ENCODE measurements at regions of chr10 and their contacts with region 1.

Region 1: DNA sequence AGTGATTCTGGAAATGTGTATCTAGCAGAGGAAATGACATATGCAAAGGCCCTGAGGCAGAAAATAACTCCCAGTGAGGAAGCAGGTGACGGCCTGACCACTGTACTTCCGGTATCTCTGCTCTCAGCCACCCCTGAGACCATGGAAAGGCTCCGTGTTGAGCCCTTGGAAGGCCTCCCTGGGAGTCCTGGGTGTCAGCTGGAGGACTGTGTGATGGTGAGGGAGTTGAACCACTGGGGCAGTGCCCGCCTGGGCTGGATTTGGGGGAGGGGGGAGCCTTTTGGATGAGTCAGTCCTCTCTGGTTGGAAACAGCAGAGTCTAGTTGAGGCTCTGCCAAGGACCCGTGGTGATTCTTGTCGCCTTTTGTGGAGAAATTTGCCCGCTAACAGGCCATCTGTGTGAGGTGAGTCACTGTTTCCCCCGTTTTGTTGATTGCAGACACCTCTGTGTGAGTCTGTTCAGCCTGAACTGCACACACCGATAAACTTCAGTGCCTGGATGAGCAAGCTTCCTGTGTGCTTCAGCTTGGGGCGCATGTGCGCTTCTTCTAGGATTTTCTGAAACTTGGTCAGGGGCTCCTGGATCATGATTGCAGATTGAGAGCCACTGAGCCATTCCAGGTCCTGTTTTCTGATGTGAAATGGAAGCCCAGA is 98.6 kb downstream of the GRK5 start:
- DNase-seq: peak; percentile 38 to 93 (median 70)
- ATAC-seq: peak; percentile 85
- H3K4me3 ChIP-seq: peak overlapping the region; percentile 65
- H3K4me3 Mint-ChIP-seq: peak overlapping the region; percentile 71 to 93 (median 90)
- H3K27ac ChIP-seq: peak overlapping the region; percentile 90
- H3K27ac Mint-ChIP-seq: peak overlapping the region; percentile 94 to 99 (median 97)
- H3K4me1 ChIP-seq: peaks cover 47 to 53% of the 10 kb centered on the region in 2 donors
- H3K4me1 Mint-ChIP-seq: peaks cover 50 to 87% (median 74%) of the 10 kb centered on the region in 7 donors
- H3K27me3 ChIP-seq: no peaks in the 10 kb centered on the region
- H3K27me3 Mint-ChIP-seq: peaks cover 0 to 2% (median 0%) of the 10 kb centered on the region in 5 donors

Region 2: DNA sequence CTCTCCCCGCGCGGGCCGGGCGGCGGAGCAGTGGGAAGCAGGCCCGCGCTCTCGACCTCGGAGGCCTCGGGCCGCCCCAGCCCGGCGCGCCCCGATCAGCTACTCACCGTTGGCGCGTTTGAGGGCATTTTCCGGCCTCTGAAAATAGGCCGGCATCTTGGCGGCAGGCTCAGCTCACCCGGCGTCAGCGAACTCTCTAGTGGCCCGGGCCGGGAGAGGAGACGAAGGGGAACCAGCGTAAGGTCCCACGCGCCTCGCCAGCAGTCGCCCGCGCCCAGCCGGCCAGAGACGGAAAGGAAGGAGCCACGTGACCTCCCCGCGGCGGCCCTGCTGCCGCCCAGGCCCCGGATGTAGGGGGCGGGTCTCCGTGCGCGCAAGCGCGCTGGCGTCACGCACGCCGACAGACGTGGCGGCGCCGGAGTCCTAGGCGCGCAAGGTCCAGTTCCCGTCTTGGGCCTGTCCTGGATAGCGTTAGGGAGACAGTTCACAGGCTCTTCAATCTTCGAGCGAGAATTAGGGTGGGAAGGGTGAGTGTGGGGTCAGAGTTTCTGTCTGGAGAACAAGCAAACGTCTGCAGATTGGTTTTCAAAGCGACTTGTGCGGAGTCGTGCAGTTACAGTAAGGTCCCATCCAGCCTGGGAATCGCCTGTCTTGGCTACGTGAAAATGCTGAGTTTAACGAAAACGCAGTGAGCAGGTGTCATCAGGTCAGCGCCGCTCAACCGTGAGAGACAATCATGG is 225.3 kb before region 1 on chr10 and contains the start of gene EIF3A:
- CTCF ChIA-PET with region 1: no interaction called
- POLR2A ChIA-PET with region 1: no interaction called
- intact Hi-C with region 1: loop called (anchors 5 to 10 kb)
- DNase-seq: peak; percentile 87 to 98 (median 93)
- ATAC-seq: peak; percentile 90
- H3K4me3 ChIP-seq: peak within 1 kb of the TSS; percentile 83
- H3K4me3 Mint-ChIP-seq: peak within 1 kb of the TSS; percentile 86 to 99 (median 98)
- H3K27ac ChIP-seq: peak within 1 kb of the TSS; percentile 91
- H3K27ac Mint-ChIP-seq: peak within 1 kb of the TSS; percentile 93 to 100 (median 98)
- H3K4me1 ChIP-seq: peaks cover 6 to 26% of the 10 kb centered on the region in 2 donors
- H3K4me1 Mint-ChIP-seq: peaks cover 28 to 55% (median 45%) of the 10 kb centered on the region in 7 donors
- H3K27me3 ChIP-seq: no peaks in the 10 kb centered on the region
- H3K27me3 Mint-ChIP-seq: peaks cover 0 to 2% (median 0%) of the 10 kb centered on the region in 5 donors
- total RNA-seq, gene EIF3A: 87.8 to 137 (median 96.0) TPM

Region 3: GRCh38 chr10:119199231-119199992 is 106.6 kb before region 1 on chr10:
- CTCF ChIA-PET with region 1: interaction called, 10 read pairs
- POLR2A ChIA-PET with region 1: interaction called, 6 read pairs
- intact Hi-C with region 1: no loop called
- DNase-seq: peak in 8 of 9 donors; percentile 42 to 72 (median 58)
- ATAC-seq: peak; percentile 93
- H3K4me3 ChIP-seq: no peak overlapping the region
- H3K4me3 Mint-ChIP-seq: peak overlapping the region in 1 of 10 donors; percentile 35
- H3K27ac ChIP-seq: no peak overlapping the region
- H3K27ac Mint-ChIP-seq: peak overlapping the region in 3 of 9 donors; percentile 46 to 73 (median 56)
- H3K4me1 ChIP-seq: no peaks in the 10 kb centered on the region
- H3K4me1 Mint-ChIP-seq: peaks cover 4 to 30% (median 9%) of the 10 kb centered on the region in 7 donors
- H3K27me3 ChIP-seq: no peaks in the 10 kb centered on the region
- H3K27me3 Mint-ChIP-seq: peaks cover 0 to 5% (median 0%) of the 10 kb centered on the region in 5 donors

Region 4: GRCh38 chr10:119235356-119235755 is 70.6 kb before region 1 on chr10:
- CTCF ChIA-PET with region 1: no interaction called
- POLR2A ChIA-PET with region 1: no interaction called
- intact Hi-C with region 1: no loop called
- DNase-seq: no peak
- ATAC-seq: no peak
- H3K4me3 ChIP-seq: no peak overlapping the region
- H3K4me3 Mint-ChIP-seq: peak overlapping the region in 3 of 10 donors; percentile 8 to 27 (median 17)
- H3K27ac ChIP-seq: peak overlapping the region; percentile 9
- H3K27ac Mint-ChIP-seq: peak overlapping the region in 7 of 9 donors; percentile 51 to 79 (median 66)
- H3K4me1 ChIP-seq: peaks cover 0 to 16% of the 10 kb centered on the region in 2 donors
- H3K4me1 Mint-ChIP-seq: peaks cover 30 to 74% (median 69%) of the 10 kb centered on the region in 7 donors
- H3K27me3 ChIP-seq: no peaks in the 10 kb centered on the region
- H3K27me3 Mint-ChIP-seq: no peaks in the 10 kb centered on the region

Region 5: GRCh38 chr10:119290291-119291048 is 15.5 kb before region 1 on chr10:
- CTCF ChIA-PET with region 1: interaction called, 8 read pairs
- POLR2A ChIA-PET with region 1: interaction called, 10 read pairs
- intact Hi-C with region 1: loop called (anchors 1 kb)
- DNase-seq: no peak
- ATAC-seq: no peak
- H3K4me3 ChIP-seq: no peak overlapping the region
- H3K4me3 Mint-ChIP-seq: peak overlapping the region; percentile 21 to 78 (median 56)
- H3K27ac ChIP-seq: peak overlapping the region; percentile 67
- H3K27ac Mint-ChIP-seq: peak overlapping the region; percentile 72 to 95 (median 92)
- H3K4me1 ChIP-seq: peaks cover 34 to 77% of the 10 kb centered on the region in 2 donors
- H3K4me1 Mint-ChIP-seq: peaks cover 67 to 85% (median 79%) of the 10 kb centered on the region in 7 donors
- H3K27me3 ChIP-seq: no peaks in the 10 kb centered on the region
- H3K27me3 Mint-ChIP-seq: no peaks in the 10 kb centered on the region

Region 6: GRCh38 chr10:119489991-119490326 is 184.0 kb after region 1 on chr10:
- CTCF ChIA-PET with region 1: no interaction called
- POLR2A ChIA-PET with region 1: interaction called, 3 read pairs
- intact Hi-C with region 1: loop called in 1 of 2 experiments (anchors 1 kb)
- DNase-seq: no peak
- ATAC-seq: no peak
- H3K4me3 ChIP-seq: peak overlapping the region; percentile 55
- H3K4me3 Mint-ChIP-seq: peak overlapping the region; percentile 53 to 92 (median 84)
- H3K27ac ChIP-seq: peak overlapping the region; percentile 83
- H3K27ac Mint-ChIP-seq: peak overlapping the region; percentile 80 to 98 (median 92)
- H3K4me1 ChIP-seq: peaks cover 24 to 36% of the 10 kb centered on the region in 2 donors
- H3K4me1 Mint-ChIP-seq: peaks cover 19 to 66% (median 59%) of the 10 kb centered on the region in 7 donors
- H3K27me3 ChIP-seq: no peaks in the 10 kb centered on the region
- H3K27me3 Mint-ChIP-seq: no peaks in the 10 kb centered on the region

Region 7: GRCh38 chr10:119872860-119873681 is 567.1 kb after region 1 on chr10:
- CTCF ChIA-PET with region 1: no interaction called
- POLR2A ChIA-PET with region 1: no interaction called
- intact Hi-C with region 1: loop called in 1 of 2 experiments (anchors 10 kb)
- DNase-seq: peak; percentile 81 to 88 (median 86)
- ATAC-seq: peak; percentile 96
- H3K4me3 ChIP-seq: peak overlapping the region; percentile 97
- H3K4me3 Mint-ChIP-seq: peak overlapping the region; percentile 82 to 92 (median 89)
- H3K27ac ChIP-seq: peak overlapping the region; percentile 84
- H3K27ac Mint-ChIP-seq: peak overlapping the region; percentile 79 to 95 (median 92)
- H3K4me1 ChIP-seq: peaks cover 21 to 28% of the 10 kb centered on the region in 2 donors
- H3K4me1 Mint-ChIP-seq: peaks cover 23 to 46% (median 41%) of the 10 kb centered on the region in 7 donors
- H3K27me3 ChIP-seq: no peaks in the 10 kb centered on the region
- H3K27me3 Mint-ChIP-seq: peaks cover 0 to 6% (median 0%) of the 10 kb centered on the region in 5 donors

Measured in naive thymus-derived CD4-positive, alpha-beta T cell (primary cell).